ENCODE measurements at regions of chr12 and their contacts with region 1.

Region 1: GRCh38 chr12:45543906-45544315 is 185.6 kb upstream of the ARID2 start:
- DNase-seq: peak; percentile 79
- H3K4me3 ChIP-seq: no peak overlapping the region
- H3K27ac ChIP-seq: no peak overlapping the region
- H3K4me1 ChIP-seq: no peaks in the 10 kb centered on the region
- H3K27me3 ChIP-seq: peaks cover 8 to 9% of the 10 kb centered on the region in 2 experiments
- CTCF ChIP-seq: peak; percentile 78 to 82
- POLR2A ChIP-seq: no peak

Region 2: DNA sequence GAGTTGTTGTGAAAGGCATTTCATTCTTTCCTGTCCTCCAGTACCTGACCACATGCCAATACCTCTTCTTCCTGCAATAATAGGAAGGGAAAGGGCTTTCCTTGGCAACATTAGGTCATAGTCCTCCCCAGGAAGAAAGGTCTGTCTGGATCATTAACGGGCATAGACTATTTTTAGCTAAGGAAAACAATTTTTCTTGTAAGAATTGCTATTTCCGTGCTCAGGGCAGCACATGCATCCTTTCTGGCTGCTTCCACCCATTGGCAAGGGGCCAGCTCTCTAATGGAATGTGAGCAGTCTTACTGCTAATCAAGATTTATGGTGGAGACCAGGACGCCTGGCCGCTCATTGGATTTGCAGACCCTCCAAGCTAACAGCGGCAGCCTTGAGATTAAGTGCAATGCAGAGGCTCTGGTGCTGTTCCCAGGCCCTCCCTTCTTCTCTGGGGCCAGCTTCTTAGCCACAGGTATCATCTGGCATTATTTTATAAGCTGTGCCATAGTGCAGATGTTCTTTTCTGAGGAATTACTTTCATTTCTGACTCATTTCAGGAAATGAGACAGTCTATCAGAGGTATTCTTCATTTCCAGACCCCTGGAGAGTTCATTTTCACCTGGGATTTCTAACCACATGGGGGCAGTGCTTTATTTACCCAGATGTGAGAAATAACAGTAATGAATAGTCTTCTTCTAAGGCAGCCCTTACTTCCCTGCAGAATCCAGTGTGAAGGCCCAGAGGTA is 275.1 kb before region 1 on chr12:
- CTCF ChIA-PET with region 1: interaction called, 3 read pairs
- POLR2A ChIA-PET with region 1: no interaction called
- dilution Hi-C with region 1: no loop called
- intact Hi-C with region 1: loop called (anchors 5 kb)
- DNase-seq: peak; percentile 99
- H3K4me3 ChIP-seq: peak overlapping the region in 1 of 3 experiments; percentile 41
- H3K27ac ChIP-seq: peak overlapping the region; percentile 93
- H3K4me1 ChIP-seq: peaks cover 44% of the 10 kb centered on the region
- H3K27me3 ChIP-seq: no peaks in the 10 kb centered on the region
- CTCF ChIP-seq: peak; percentile 41 to 63
- POLR2A ChIP-seq: peak; percentile 36

Region 3: GRCh38 chr12:45336331-45337064 is 207.4 kb before region 1 on chr12:
- CTCF ChIA-PET with region 1: no interaction called
- POLR2A ChIA-PET with region 1: no interaction called
- dilution Hi-C with region 1: no loop called
- intact Hi-C with region 1: no loop called
- DNase-seq: peak; percentile 31
- H3K4me3 ChIP-seq: no peak overlapping the region
- H3K27ac ChIP-seq: no peak overlapping the region
- H3K4me1 ChIP-seq: no peaks in the 10 kb centered on the region
- H3K27me3 ChIP-seq: no peaks in the 10 kb centered on the region
- CTCF ChIP-seq: no peak
- POLR2A ChIP-seq: no peak

Region 4: DNA sequence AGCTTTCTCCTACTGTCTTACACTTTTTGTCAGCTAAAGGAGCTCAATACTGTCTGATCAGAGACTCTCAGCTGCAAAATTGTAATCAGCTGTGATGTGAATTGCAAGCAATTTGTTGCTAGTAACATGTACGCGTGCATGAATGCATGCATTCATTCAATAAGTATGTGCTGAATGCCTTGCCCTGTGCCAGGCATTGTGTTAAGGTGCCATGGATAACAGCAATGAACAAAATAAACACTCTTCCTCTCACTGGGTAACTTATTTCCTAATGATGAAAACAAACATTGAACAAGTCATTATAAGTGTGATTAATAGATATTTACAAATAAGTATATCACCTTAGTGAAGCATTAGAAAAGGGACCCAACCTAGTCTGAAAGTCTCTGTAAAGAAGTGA is 22.3 kb after region 1 on chr12:
- CTCF ChIA-PET with region 1: interaction called, 14 read pairs
- POLR2A ChIA-PET with region 1: no interaction called
- dilution Hi-C with region 1: no loop called
- intact Hi-C with region 1: no loop called
- DNase-seq: no peak
- H3K4me3 ChIP-seq: no peak overlapping the region
- H3K27ac ChIP-seq: no peak overlapping the region
- H3K4me1 ChIP-seq: no peaks in the 10 kb centered on the region
- H3K27me3 ChIP-seq: peaks cover 12 to 19% of the 10 kb centered on the region in 2 experiments
- CTCF ChIP-seq: no peak
- POLR2A ChIP-seq: no peak

Region 5: GRCh38 chr12:45685680-45686079 is 141.8 kb after region 1 on chr12:
- CTCF ChIA-PET with region 1: interaction called, 10 read pairs
- POLR2A ChIA-PET with region 1: no interaction called
- dilution Hi-C with region 1: no loop called
- intact Hi-C with region 1: no loop called
- DNase-seq: no peak
- H3K4me3 ChIP-seq: no peak overlapping the region
- H3K27ac ChIP-seq: no peak overlapping the region
- H3K4me1 ChIP-seq: no peaks in the 10 kb centered on the region
- H3K27me3 ChIP-seq: peaks cover 2 to 11% of the 10 kb centered on the region in 2 experiments
- CTCF ChIP-seq: no peak
- POLR2A ChIP-seq: no peak

Region 6: GRCh38 chr12:45720069-45720468 is 176.2 kb after region 1 on chr12:
- CTCF ChIA-PET with region 1: interaction called, 337 read pairs
- POLR2A ChIA-PET with region 1: no interaction called
- dilution Hi-C with region 1: no loop called
- intact Hi-C with region 1: no loop called
- DNase-seq: no peak
- H3K4me3 ChIP-seq: no peak overlapping the region
- H3K27ac ChIP-seq: no peak overlapping the region
- H3K4me1 ChIP-seq: peaks cover 3% of the 10 kb centered on the region
- H3K27me3 ChIP-seq: no peaks in the 10 kb centered on the region
- CTCF ChIP-seq: no peak
- POLR2A ChIP-seq: no peak

Region 7: GRCh38 chr12:45756666-45757065 is 212.8 kb after region 1 on chr12:
- CTCF ChIA-PET with region 1: interaction called, 18 read pairs
- POLR2A ChIA-PET with region 1: no interaction called
- dilution Hi-C with region 1: no loop called
- intact Hi-C with region 1: no loop called
- DNase-seq: no peak
- H3K4me3 ChIP-seq: no peak overlapping the region
- H3K27ac ChIP-seq: no peak overlapping the region
- H3K4me1 ChIP-seq: no peaks in the 10 kb centered on the region
- H3K27me3 ChIP-seq: no peaks in the 10 kb centered on the region
- CTCF ChIP-seq: no peak
- POLR2A ChIP-seq: no peak

Region 8: GRCh38 chr12:46005151-46005797 is 461.4 kb after region 1 on chr12:
- CTCF ChIA-PET with region 1: interaction called, 15 read pairs
- POLR2A ChIA-PET with region 1: no interaction called
- dilution Hi-C with region 1: no loop called
- intact Hi-C with region 1: loop called (anchors 5 kb)
- DNase-seq: peak; percentile 34
- H3K4me3 ChIP-seq: no peak overlapping the region
- H3K27ac ChIP-seq: no peak overlapping the region
- H3K4me1 ChIP-seq: no peaks in the 10 kb centered on the region
- H3K27me3 ChIP-seq: peaks cover 5 to 13% of the 10 kb centered on the region in 2 experiments
- CTCF ChIP-seq: no peak
- POLR2A ChIP-seq: no peak

Measured in endothelial cell of umbilical vein (primary cell).